Calu3 (cell line): ENCODE measurements at regions of chr5 and their contacts with region 1.

Region 1: GRCh38 chr5:100623719-100624118 is 88.5 kb downstream of the FAM174A start:
- DNase-seq: no peak
- H3K4me3 Mint-ChIP-seq: no peak overlapping the region
- H3K27ac Mint-ChIP-seq: no peak overlapping the region
- H3K4me1 Mint-ChIP-seq: no peaks in the 10 kb centered on the region
- H3K27me3 Mint-ChIP-seq: no peaks in the 10 kb centered on the region
- CTCF ChIP-seq: peak; percentile 51

Region 2: DNA sequence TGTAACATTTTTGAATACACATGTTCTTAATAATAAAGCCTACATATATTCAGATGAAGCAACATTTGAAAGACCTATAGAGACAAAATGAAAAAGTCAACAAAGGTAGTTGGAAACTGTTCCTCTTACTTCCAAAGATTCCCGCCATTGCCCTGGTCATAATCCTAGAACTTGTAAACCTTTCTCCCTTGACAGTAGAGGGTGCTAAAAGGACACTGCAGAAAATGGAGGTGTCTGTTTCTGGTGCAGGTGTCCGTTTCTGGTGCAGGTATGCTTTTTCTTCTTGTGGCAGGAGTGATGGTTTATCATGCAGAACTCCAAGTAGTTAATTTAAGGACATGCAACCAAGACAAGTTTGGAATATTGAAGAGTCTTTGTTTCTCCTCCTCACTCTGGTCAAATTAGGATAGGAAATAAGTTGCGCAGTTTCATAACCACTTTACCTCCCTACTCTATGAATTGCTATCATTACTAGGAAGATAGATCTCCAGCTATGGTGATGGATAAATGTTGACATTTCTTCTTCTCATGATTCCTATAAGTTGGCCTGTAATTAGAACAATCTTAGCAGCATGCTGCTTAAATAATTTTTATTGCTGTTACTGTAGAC is 144.5 kb before region 1 on chr5:
- CTCF ChIA-PET with region 1: no interaction called
- intact Hi-C with region 1: loop called (anchors 5 kb)
- DNase-seq: peak; percentile 46
- H3K4me3 Mint-ChIP-seq: no peak overlapping the region
- H3K27ac Mint-ChIP-seq: no peak overlapping the region
- H3K4me1 Mint-ChIP-seq: no peaks in the 10 kb centered on the region
- H3K27me3 Mint-ChIP-seq: no peaks in the 10 kb centered on the region
- CTCF ChIP-seq: peak; percentile 65

Region 3: GRCh38 chr5:100787648-100788047 is 163.9 kb after region 1 on chr5:
- CTCF ChIA-PET with region 1: no interaction called
- intact Hi-C with region 1: loop called (anchors 2 kb)
- DNase-seq: no peak
- H3K4me3 Mint-ChIP-seq: no peak overlapping the region
- H3K27ac Mint-ChIP-seq: no peak overlapping the region
- H3K4me1 Mint-ChIP-seq: peaks cover 67% of the 10 kb centered on the region
- H3K27me3 Mint-ChIP-seq: no peaks in the 10 kb centered on the region
- CTCF ChIP-seq: no peak

Region 4: GRCh38 chr5:101012880-101013279 is 389.2 kb after region 1 on chr5:
- CTCF ChIA-PET with region 1: no interaction called
- intact Hi-C with region 1: loop called (anchors 1 kb)
- DNase-seq: no peak
- H3K4me3 Mint-ChIP-seq: no peak overlapping the region
- H3K27ac Mint-ChIP-seq: no peak overlapping the region
- H3K4me1 Mint-ChIP-seq: peaks cover 11% of the 10 kb centered on the region
- H3K27me3 Mint-ChIP-seq: no peaks in the 10 kb centered on the region
- CTCF ChIP-seq: no peak

Region 5: GRCh38 chr5:101045689-101046088 is 422.0 kb after region 1 on chr5:
- CTCF ChIA-PET with region 1: no interaction called
- intact Hi-C with region 1: loop called (anchors 1 kb)
- DNase-seq: no peak
- H3K4me3 Mint-ChIP-seq: no peak overlapping the region
- H3K27ac Mint-ChIP-seq: no peak overlapping the region
- H3K4me1 Mint-ChIP-seq: peaks cover 8% of the 10 kb centered on the region
- H3K27me3 Mint-ChIP-seq: no peaks in the 10 kb centered on the region
- CTCF ChIP-seq: peak; percentile 14

Region 6: GRCh38 chr5:101390151-101390908 is 766.6 kb after region 1 on chr5:
- CTCF ChIA-PET with region 1: no interaction called
- intact Hi-C with region 1: loop called (anchors 2 kb)
- DNase-seq: peak; percentile 40
- H3K4me3 Mint-ChIP-seq: no peak overlapping the region
- H3K27ac Mint-ChIP-seq: no peak overlapping the region
- H3K4me1 Mint-ChIP-seq: no peaks in the 10 kb centered on the region
- H3K27me3 Mint-ChIP-seq: no peaks in the 10 kb centered on the region
- CTCF ChIP-seq: peak; percentile 55

Region 7: DNA sequence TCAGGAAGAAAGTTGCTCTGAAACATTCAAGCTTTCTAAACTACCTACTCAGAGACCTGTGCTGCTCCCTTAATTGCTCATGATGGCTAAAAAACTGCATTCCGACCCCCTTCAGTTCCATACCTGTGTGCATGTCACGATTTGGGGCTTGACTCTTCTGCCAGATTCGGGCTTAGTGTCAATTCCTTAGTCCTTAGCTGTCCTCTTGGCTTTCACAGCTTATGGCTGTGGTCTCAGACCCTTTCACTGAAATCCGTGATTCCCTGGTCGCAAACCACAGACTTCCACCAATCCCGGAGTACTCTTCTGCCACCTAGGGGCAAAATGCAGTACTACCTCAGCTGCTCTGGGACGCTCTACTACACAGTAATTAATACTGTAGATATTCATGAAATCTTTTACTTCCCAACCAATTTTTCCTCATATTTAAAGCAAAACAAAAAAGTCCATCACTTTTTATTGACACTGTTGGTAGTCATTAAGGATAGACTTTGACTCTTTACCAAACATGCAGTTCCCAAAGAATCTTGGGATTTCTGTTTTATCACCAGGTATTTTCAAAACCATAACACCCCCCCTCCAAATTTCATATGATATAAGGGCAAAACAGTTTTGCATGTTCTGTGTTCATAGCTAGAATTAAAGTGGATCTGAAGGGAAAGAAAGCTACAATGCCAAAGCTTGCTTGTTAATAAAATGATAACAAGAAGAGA is 1054.9 kb after region 1 on chr5:
- CTCF ChIA-PET with region 1: no interaction called
- intact Hi-C with region 1: loop called (anchors 2 kb)
- DNase-seq: peak; percentile 87
- H3K4me3 Mint-ChIP-seq: peak overlapping the region; percentile 55
- H3K27ac Mint-ChIP-seq: no peak overlapping the region
- H3K4me1 Mint-ChIP-seq: peaks cover 19% of the 10 kb centered on the region
- H3K27me3 Mint-ChIP-seq: no peaks in the 10 kb centered on the region
- CTCF ChIP-seq: peak; percentile 90